ENCODE measurements at regions of chr3 and their contacts with region 1.

Region 1: GRCh38 chr3:56725175-56725574 is 42.1 kb upstream of the TASOR start:
- DNase-seq: peak; percentile 10 to 77 (median 60)
- ATAC-seq: peak; percentile 92 to 97
- H3K4me3 Mint-ChIP-seq: peak overlapping the region; percentile 65 to 83 (median 74)
- H3K27ac Mint-ChIP-seq: peak overlapping the region; percentile 81 to 98 (median 94)
- H3K4me1 Mint-ChIP-seq: peaks cover 23 to 73% (median 62%) of the 10 kb centered on the region in 4 donors
- H3K27me3 Mint-ChIP-seq: no peaks in the 10 kb centered on the region

Region 2: GRCh38 chr3:56737006-56737405 is 11.8 kb after region 1 on chr3:
- POLR2A ChIA-PET with region 1: interaction called, 11 read pairs
- DNase-seq: no peak
- ATAC-seq: no peak
- H3K4me3 Mint-ChIP-seq: peak overlapping the region in 1 of 10 donors; percentile 41
- H3K27ac Mint-ChIP-seq: peak overlapping the region in 9 of 10 donors; percentile 14 to 94 (median 68)
- H3K4me1 Mint-ChIP-seq: peaks cover 26 to 54% (median 41%) of the 10 kb centered on the region in 4 donors
- H3K27me3 Mint-ChIP-seq: no peaks in the 10 kb centered on the region

Region 3: GRCh38 chr3:56753206-56753820 is 28.1 kb after region 1 on chr3:
- POLR2A ChIA-PET with region 1: interaction called, 13 read pairs
- DNase-seq: peak in 1 of 10 donors; percentile 15
- ATAC-seq: peak in 1 of 2 donors; percentile 67
- H3K4me3 Mint-ChIP-seq: peak overlapping the region in 9 of 10 donors; percentile 8 to 96 (median 88)
- H3K27ac Mint-ChIP-seq: peak overlapping the region; percentile 78 to 99 (median 97)
- H3K4me1 Mint-ChIP-seq: peaks cover 32 to 82% (median 69%) of the 10 kb centered on the region in 4 donors
- H3K27me3 Mint-ChIP-seq: no peaks in the 10 kb centered on the region

Region 4: GRCh38 chr3:56837196-56837955 is 112.2 kb after region 1 on chr3:
- POLR2A ChIA-PET with region 1: no interaction called
- DNase-seq: no peak
- ATAC-seq: no peak
- H3K4me3 Mint-ChIP-seq: peak overlapping the region in 1 of 10 donors; percentile 2
- H3K27ac Mint-ChIP-seq: peak overlapping the region in 2 of 10 donors; percentile 53 to 65
- H3K4me1 Mint-ChIP-seq: peaks cover 7 to 30% (median 14%) of the 10 kb centered on the region in 4 donors
- H3K27me3 Mint-ChIP-seq: no peaks in the 10 kb centered on the region

Measured in naive thymus-derived CD8-positive, alpha-beta T cell (primary cell).